ENCODE measurements at regions of chr6 and their contacts with region 1.

Region 1: DNA sequence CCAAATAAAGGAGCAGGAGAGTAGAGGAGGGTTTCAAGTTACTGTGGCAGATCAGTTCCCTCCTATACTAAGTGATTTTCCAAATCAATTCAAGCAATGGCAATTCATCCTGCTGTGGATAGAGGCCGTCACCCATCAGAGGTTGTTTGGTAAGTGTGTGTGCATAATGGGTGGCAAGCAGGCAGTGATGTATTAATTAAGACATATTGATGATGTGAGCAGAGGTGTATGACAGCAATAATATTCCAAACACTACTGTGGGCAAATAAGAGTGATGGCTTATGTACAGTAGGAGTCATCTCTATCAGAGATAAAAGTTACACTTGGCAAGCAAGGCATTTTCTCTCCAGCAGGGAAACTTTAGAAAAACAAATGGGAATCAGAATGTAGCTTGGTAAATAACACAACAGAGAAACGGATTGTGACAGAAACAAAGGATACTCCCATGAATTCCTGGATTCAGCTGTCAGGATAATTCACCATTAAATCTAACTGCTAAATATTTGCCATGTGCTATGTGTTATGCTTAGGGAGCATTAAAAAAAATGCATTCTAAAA is 196.3 kb downstream of the KHDC1L start:
- DNase-seq: no peak
- H3K4me3 ChIP-seq: no peak overlapping the region
- H3K27ac ChIP-seq: no peak overlapping the region
- H3K27me3 ChIP-seq: no peaks in the 10 kb centered on the region
- CTCF ChIP-seq: no peak

Region 2: DNA sequence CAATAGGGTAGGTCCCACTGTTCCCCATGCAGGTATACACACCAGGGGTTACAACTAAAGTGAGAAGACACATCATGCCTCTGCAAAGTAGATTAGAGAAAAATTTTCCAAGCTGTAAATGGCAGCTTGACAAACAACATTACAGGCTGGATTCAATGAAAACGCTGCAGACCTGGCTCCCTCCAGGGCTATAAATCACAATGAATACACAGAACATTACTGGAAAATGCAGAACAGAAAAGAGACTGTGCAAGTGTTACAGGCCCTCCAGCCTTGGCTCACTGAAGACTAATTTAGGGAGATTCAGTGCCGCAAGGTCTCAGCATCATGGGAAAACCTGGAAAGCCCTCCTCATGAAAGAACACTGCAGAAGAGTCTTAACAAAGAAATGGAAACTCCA is 11.5 kb before region 1 on chr6:
- intact Hi-C with region 1: loop called in 1 of 2 experiments (anchors 1 kb)
- DNase-seq: no peak
- H3K4me3 ChIP-seq: no peak overlapping the region
- H3K27ac ChIP-seq: no peak overlapping the region
- H3K27me3 ChIP-seq: no peaks in the 10 kb centered on the region
- CTCF ChIP-seq: no peak

Region 3: GRCh38 chr6:73194744-73195143 is 165.8 kb after region 1 on chr6:
- intact Hi-C with region 1: no loop called
- DNase-seq: no peak
- H3K4me3 ChIP-seq: no peak overlapping the region
- H3K27ac ChIP-seq: no peak overlapping the region
- H3K27me3 ChIP-seq: no peaks in the 10 kb centered on the region
- CTCF ChIP-seq: no peak

Measured in dorsolateral prefrontal cortex (tissue), 120 donors.